Activated naive CD4-positive, alpha-beta T cell treated with anti-CD3 and anti-CD28 coated beads for 36 hours (primary cell): ENCODE measurements at regions of chr3 and their contacts with region 1.

Region 1: DNA sequence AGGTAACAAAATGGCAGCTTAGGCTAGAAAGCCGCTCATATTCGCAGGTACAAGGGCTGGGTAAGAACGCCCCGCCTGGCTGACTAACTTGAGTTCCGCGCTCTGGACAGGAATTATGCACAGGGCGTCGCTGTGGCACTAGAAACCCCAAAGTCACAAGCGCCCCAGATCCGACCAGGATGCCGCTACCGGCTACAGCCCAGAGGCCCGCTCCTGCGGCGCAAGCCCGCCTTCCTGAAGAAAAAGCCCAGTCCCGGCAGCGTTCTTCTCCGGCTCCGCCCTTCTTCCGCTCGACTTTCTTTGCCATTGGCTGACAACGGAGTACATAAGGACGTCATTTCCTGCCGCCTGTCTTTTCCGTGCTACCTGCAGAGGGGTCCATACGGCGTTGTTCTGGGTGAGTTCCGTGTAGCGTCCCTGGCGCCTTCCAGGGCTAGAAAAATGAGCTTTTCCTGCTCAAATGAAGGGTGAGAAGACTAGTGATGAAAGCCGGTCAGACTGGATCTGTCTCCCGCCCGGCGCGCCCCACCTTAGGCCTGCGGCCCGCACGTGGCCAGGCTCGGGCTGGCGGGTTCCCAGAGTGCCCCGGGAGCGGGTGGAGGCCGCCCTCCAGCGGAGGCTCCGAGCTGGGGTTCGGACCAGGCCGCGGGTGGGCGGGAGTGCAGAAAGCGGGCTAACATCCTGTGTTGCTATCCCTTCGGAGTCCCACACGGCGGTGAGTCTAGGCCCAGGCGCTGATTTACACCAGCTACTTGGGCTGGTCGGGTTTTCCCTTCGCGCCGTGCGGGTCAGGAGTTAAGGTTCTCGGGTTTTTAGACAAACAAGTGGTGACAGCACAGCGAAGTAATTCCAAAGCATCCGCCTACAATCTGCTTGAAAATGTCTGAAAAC is at the start of gene RPSA:
- DNase-seq: peak; percentile 98
- H3K4me3 Mint-ChIP-seq: peak within 1 kb of the TSS; percentile 94
- H3K27ac Mint-ChIP-seq: peak within 1 kb of the TSS; percentile 96
- H3K4me1 Mint-ChIP-seq: peaks cover 41% of the 10 kb centered on the region
- H3K27me3 Mint-ChIP-seq: no peaks in the 10 kb centered on the region
- total RNA-seq, gene RPSA: 3,309 to 3,414 TPM

Region 2: DNA sequence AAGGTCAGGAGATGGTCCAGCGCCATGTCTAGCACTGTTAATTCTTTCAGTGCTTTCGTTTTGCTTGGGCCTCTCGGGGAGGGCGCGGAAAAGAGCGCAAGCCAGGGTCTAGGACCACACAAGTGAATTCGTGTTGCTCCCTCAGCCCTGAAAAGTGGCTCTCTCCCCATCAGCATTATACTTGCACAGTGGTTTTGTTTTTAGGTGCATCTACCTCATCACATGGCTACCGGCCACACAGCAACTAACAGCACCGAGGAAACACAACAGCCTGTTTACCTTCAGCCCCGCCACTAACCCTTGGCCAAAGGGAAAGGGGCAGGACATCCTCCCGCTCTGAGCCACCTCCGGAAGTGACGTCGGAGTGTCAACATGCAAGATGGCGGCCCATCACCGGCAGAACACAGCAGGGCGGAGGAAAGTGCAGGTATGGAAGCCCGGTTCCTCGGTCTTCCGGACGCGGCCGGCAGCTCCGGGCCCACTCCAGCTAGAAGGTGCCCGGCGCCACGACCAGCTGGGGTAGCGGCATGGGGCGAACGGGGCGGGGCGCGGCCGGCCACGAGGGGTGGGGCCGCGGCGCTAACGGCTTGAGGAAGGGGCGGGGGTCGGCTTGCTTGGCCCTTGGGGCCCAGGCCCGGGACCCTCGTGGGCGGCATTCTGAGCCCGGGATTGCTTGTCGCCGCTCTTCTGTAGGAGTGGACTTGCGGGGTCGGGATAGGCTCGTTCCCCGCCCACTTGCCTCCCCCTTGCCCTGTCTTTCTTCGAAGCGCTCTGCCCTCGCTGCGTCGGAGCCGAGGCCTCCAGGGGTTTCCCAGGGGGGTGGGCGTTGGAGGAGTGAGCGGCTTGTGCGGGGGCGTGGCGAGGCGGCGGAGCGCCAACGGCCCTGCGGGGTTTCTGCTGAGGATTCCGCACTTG is 354.7 kb before region 1 on chr3 and contains the starts of genes SCN11A and WDR48:
- CTCF ChIA-PET with region 1: no interaction called
- intact Hi-C with region 1: loop called (anchors 1 kb)
- DNase-seq: peak; percentile 97
- H3K4me3 Mint-ChIP-seq: peak within 1 kb of the TSS; percentile 96
- H3K27ac Mint-ChIP-seq: peak within 1 kb of the TSS; percentile 98
- H3K4me1 Mint-ChIP-seq: peaks cover 50% of the 10 kb centered on the region
- H3K27me3 Mint-ChIP-seq: no peaks in the 10 kb centered on the region
- total RNA-seq, gene SCN11A: 0.05 TPM
- total RNA-seq, gene WDR48: 32.3 to 32.9 TPM

Region 3: GRCh38 chr3:39295184-39295775 is 111.3 kb before region 1 on chr3:
- CTCF ChIA-PET with region 1: interaction called, 12 read pairs
- intact Hi-C with region 1: loop called (anchors 1 kb)
- DNase-seq: no peak
- H3K4me3 Mint-ChIP-seq: no peak overlapping the region
- H3K27ac Mint-ChIP-seq: no peak overlapping the region
- H3K4me1 Mint-ChIP-seq: peaks cover 19% of the 10 kb centered on the region
- H3K27me3 Mint-ChIP-seq: no peaks in the 10 kb centered on the region

Region 4: GRCh38 chr3:39447637-39448483 is 41.2 kb after region 1 on chr3:
- CTCF ChIA-PET with region 1: interaction called, 3 read pairs
- intact Hi-C with region 1: loop called (anchors 1 kb)
- DNase-seq: peak; percentile 78
- H3K4me3 Mint-ChIP-seq: no peak overlapping the region
- H3K27ac Mint-ChIP-seq: no peak overlapping the region
- H3K4me1 Mint-ChIP-seq: no peaks in the 10 kb centered on the region
- H3K27me3 Mint-ChIP-seq: no peaks in the 10 kb centered on the region

Region 5: DNA sequence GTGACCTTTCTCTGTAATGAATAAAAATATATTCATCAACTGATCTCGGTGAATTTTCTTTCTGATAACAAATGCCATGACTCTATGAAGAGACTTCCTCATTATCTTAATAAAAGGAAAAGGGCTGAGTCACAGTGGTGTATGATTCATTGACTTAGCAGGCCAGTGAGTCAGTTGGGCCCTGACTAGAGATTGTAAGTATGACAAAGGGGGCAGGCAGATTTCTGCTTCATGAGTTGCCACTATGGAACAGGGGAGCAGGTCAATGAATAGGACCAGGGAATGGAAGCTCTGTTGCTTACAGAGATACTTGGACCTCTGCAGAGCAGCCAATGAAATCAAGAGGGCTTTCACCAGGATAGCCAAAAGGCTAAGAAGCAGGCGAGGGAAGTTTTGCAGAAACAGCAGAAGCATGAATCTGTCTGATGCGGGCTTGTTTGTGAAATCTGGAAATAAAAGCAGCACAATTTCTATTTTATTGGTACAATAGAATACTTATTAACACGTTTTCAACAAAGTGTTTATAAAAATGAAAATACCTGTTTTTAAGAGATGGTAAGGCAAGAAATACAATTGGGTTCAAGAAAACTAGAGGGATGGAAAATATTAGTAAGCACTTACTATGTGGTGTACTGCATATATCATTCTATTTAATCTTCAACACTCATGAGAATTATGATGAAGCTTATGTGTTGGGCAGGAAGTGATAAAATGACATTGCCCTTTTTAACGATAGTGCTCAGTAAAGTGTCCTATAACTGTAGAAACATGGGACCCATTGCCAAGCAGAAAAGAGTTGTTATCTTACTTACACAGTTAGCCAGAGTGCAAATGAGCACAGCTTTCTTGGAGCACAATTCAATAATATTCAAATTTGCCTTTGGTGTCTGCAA is 233.0 kb after region 1 on chr3:
- CTCF ChIA-PET with region 1: no interaction called
- intact Hi-C with region 1: loop called (anchors 2 kb)
- DNase-seq: peak; percentile 44
- H3K4me3 Mint-ChIP-seq: no peak overlapping the region
- H3K27ac Mint-ChIP-seq: no peak overlapping the region
- H3K4me1 Mint-ChIP-seq: peaks cover 12% of the 10 kb centered on the region
- H3K27me3 Mint-ChIP-seq: peaks cover 14% of the 10 kb centered on the region

Region 6: GRCh38 chr3:39668420-39668819 is 261.8 kb after region 1 on chr3:
- CTCF ChIA-PET with region 1: no interaction called
- intact Hi-C with region 1: no loop called
- DNase-seq: no peak
- H3K4me3 Mint-ChIP-seq: no peak overlapping the region
- H3K27ac Mint-ChIP-seq: no peak overlapping the region
- H3K4me1 Mint-ChIP-seq: no peaks in the 10 kb centered on the region
- H3K27me3 Mint-ChIP-seq: peaks cover 7% of the 10 kb centered on the region

Region 7: GRCh38 chr3:40309418-40309924 is 902.9 kb after region 1 on chr3 and contains the start of gene EIF1B:
- CTCF ChIA-PET with region 1: no interaction called
- intact Hi-C with region 1: loop called (anchors 1 kb)
- DNase-seq: peak; percentile 99
- H3K4me3 Mint-ChIP-seq: peak within 1 kb of the TSS; percentile 99
- H3K27ac Mint-ChIP-seq: peak within 1 kb of the TSS; percentile 98
- H3K4me1 Mint-ChIP-seq: peaks cover 24% of the 10 kb centered on the region
- H3K27me3 Mint-ChIP-seq: no peaks in the 10 kb centered on the region
- total RNA-seq, gene EIF1B: 47.0 to 49.2 TPM